PC-9 (cell line): ENCODE measurements at regions of chr13 and their contacts with region 1.

Region 1: GRCh38 chr13:44435142-44435982 is 61.7 kb downstream of the SERP2 start:
- DNase-seq: peak; percentile 87 to 90
- H3K4me3 ChIP-seq: peak overlapping the region; percentile 86
- H3K27ac ChIP-seq: peak overlapping the region; percentile 93
- H3K4me1 ChIP-seq: peaks cover 33% of the 10 kb centered on the region
- H3K27me3 ChIP-seq: no peaks in the 10 kb centered on the region
- CTCF ChIP-seq: no peak

Region 2: DNA sequence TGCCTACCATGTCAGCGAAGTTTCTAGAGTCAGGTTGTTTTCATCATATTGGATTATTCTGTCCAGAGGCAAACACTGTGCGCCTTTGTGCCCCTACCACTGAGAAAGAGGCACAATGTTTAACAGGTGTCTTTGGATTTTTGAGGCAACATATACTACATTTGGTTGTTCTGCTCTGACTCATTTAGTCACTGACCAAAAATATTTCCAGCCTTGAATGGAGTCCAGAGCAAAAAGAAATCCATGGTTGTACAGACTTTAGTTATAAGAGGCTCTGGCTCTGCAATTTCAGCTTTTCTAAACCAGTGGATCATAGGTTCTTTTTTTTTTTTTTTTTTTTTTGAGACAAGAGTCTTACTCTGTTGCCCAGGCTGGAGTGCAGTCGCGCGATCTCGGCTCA is 519.9 kb before region 1 on chr13:
- CTCF ChIA-PET with region 1: no interaction called
- POLR2A ChIA-PET with region 1: interaction called, 26 read pairs
- intact Hi-C with region 1: no loop called
- DNase-seq: no peak
- H3K4me3 ChIP-seq: no peak overlapping the region
- H3K27ac ChIP-seq: no peak overlapping the region
- H3K4me1 ChIP-seq: no peaks in the 10 kb centered on the region
- H3K27me3 ChIP-seq: no peaks in the 10 kb centered on the region
- CTCF ChIP-seq: no peak

Region 3: GRCh38 chr13:44050450-44051063 is 384.8 kb before region 1 on chr13:
- CTCF ChIA-PET with region 1: no interaction called
- POLR2A ChIA-PET with region 1: no interaction called
- intact Hi-C with region 1: loop called (anchors 2 kb)
- DNase-seq: no peak
- H3K4me3 ChIP-seq: no peak overlapping the region
- H3K27ac ChIP-seq: no peak overlapping the region
- H3K4me1 ChIP-seq: peaks cover 2% of the 10 kb centered on the region
- H3K27me3 ChIP-seq: no peaks in the 10 kb centered on the region
- CTCF ChIP-seq: peak; percentile 70

Region 4: DNA sequence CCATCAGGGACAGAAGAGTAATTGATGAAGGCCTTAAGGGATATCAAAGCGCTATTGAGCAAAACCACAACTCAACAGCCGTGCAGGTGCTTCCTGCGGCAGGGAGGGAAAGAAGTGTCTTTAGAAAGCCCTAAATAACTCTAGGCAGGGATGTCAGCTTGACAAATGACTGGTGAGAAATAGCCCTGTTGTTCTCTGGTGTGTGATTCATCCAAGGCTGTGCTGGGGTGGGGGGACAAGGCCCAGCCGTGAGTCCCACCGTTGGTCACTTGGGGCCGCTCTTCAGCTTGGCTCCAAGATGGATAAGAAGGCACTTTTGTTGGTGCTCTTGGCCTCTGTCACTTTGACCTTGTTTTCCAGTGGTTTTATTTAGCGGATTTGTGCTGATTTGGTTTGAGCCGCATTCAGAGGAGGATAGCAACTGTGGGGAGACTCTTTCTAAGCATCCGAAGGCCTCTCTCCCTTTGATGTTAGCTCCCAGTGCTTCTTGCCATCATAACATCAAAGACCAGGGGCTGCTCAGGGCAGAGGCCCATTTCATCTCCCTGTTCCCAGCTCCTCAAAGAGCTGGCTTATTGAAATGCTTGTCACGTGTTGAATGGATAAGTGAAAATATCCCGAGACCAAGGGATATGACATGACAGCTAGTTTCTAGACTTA is 192.0 kb before region 1 on chr13:
- CTCF ChIA-PET with region 1: interaction called, 3 read pairs
- POLR2A ChIA-PET with region 1: interaction called, 30 read pairs
- intact Hi-C with region 1: loop called (anchors 1 kb)
- DNase-seq: peak; percentile 78 to 88
- H3K4me3 ChIP-seq: no peak overlapping the region
- H3K27ac ChIP-seq: peak overlapping the region; percentile 58
- H3K4me1 ChIP-seq: peaks cover 16% of the 10 kb centered on the region
- H3K27me3 ChIP-seq: no peaks in the 10 kb centered on the region
- CTCF ChIP-seq: peak; percentile 74

Region 5: DNA sequence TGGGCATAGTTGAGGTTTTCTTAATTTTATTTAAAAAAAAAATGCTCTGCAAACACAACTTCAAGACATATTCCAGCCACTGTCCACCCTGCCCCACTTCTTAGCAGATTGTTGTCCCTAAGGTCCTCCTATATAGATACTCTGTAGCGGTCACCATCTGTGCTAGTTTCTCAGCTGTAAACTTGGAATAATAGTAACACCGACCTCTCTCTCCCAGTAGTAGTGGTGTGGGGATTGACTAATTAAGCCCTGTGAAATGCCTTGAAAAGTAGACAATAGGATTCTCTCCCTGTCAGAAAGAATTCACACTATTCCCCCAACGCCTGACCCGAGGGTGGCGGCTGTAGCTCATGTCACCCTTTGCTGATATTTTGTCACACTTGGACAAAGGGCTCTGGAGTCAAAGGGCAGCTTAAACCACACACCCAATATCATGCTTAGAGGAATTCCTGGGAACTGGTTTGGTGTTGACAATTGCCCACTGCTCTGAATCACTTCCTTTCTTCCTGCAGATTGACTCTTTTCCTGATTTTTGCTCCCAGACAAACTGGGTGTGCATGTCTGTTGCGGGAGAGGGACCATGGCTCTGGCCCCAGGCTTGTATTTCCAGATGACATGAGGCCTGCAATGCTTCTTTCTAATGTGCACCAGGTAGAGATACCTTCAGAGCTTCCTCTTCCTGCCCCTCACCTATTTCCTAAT is 70.9 kb before region 1 on chr13:
- CTCF ChIA-PET with region 1: interaction called, 29 read pairs
- POLR2A ChIA-PET with region 1: interaction called, 15 read pairs
- intact Hi-C with region 1: loop called (anchors 1 kb)
- DNase-seq: peak; percentile 63 to 97
- H3K4me3 ChIP-seq: peak overlapping the region; percentile 36; the same call in 1 of the 2 replicates
- H3K27ac ChIP-seq: peak overlapping the region; percentile 96
- H3K4me1 ChIP-seq: peaks cover 86% of the 10 kb centered on the region
- H3K27me3 ChIP-seq: no peaks in the 10 kb centered on the region
- CTCF ChIP-seq: no peak

Region 6: GRCh38 chr13:44470638-44471562 is 35.5 kb after region 1 on chr13:
- CTCF ChIA-PET with region 1: interaction called, 4 read pairs
- POLR2A ChIA-PET with region 1: interaction called, 10 read pairs
- intact Hi-C with region 1: loop called (anchors 5 kb)
- DNase-seq: no peak
- H3K4me3 ChIP-seq: no peak overlapping the region
- H3K27ac ChIP-seq: 0 out of 2 replicates have a peak overlapping the region, but pooled peaks have one; percentile 26
- H3K4me1 ChIP-seq: peaks cover 48% of the 10 kb centered on the region
- H3K27me3 ChIP-seq: no peaks in the 10 kb centered on the region
- CTCF ChIP-seq: peak; percentile 70

Region 7: GRCh38 chr13:44815623-44816022 is 380.3 kb after region 1 on chr13:
- CTCF ChIA-PET with region 1: no interaction called
- POLR2A ChIA-PET with region 1: no interaction called
- intact Hi-C with region 1: no loop called
- DNase-seq: peak; percentile 82 to 96
- H3K4me3 ChIP-seq: no peak overlapping the region
- H3K27ac ChIP-seq: peak overlapping the region; percentile 86
- H3K4me1 ChIP-seq: peaks cover 64% of the 10 kb centered on the region
- H3K27me3 ChIP-seq: no peaks in the 10 kb centered on the region
- CTCF ChIP-seq: no peak

Region 8: GRCh38 chr13:44930963-44931623 is 495.7 kb after region 1 on chr13:
- CTCF ChIA-PET with region 1: no interaction called
- POLR2A ChIA-PET with region 1: no interaction called
- intact Hi-C with region 1: no loop called
- DNase-seq: peak; percentile 14 to 77
- H3K4me3 ChIP-seq: no peak overlapping the region
- H3K27ac ChIP-seq: peak overlapping the region; percentile 65
- H3K4me1 ChIP-seq: peaks cover 53% of the 10 kb centered on the region
- H3K27me3 ChIP-seq: no peaks in the 10 kb centered on the region
- CTCF ChIP-seq: no peak